ENCODE measurements at regions of chr10 and their contacts with region 1.

Region 1: DNA sequence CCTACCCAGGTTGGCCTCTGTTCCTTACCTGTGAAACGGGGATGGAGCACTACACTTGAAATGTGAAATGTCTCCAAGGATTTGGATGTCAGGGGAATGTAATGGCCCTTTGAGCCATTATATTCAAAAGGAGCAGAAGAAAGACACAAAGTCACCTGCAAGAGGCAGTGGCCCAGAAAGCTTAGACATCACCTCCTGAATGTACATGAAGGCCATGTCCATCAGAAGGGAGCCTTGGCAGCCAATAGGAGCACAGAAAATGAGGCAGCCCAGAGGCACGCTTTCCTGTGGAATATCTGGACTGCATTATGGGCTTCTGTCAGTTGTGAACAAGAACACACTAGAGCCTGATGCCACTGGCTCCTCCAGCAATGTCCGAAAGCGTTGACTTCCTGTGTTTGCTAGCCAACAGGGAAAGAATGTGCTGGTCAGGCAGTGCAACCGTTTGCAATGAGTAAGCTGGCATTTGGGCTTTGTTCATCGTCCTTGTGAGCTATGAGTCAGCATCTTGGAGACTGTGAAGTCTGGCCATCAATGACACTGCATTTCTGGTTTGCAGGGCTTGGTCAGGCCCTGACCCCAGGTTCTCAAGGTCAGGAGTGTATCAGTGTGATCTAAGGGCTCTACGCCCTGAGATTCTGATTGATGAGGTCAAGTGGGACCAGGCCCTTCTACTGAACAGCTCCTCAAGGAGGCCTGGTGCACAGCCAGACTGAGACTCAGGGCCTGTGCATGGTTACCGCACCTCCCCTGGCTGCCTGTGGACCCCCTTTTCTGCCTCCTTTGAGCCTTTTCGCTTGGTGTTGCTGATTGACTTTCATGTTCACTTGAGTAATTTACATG is 222.4 kb downstream of the RPS24 start:
- DNase-seq: peak; percentile 64 to 93
- H3K4me3 ChIP-seq: no peak overlapping the region
- H3K27ac ChIP-seq: peak overlapping the region; percentile 69 to 79
- H3K4me1 ChIP-seq: peaks cover 0 to 10% of the 10 kb centered on the region in 2 donors
- H3K27me3 ChIP-seq: no peaks in the 10 kb centered on the region
- CTCF ChIP-seq: no peak

Region 2: GRCh38 chr10:78211561-78212051 is 44.4 kb before region 1 on chr10:
- intact Hi-C with region 1: loop called (anchors 5 kb)
- DNase-seq: no peak
- H3K4me3 ChIP-seq: no peak overlapping the region
- H3K27ac ChIP-seq: no peak overlapping the region
- H3K4me1 ChIP-seq: peaks cover 4 to 13% of the 10 kb centered on the region in 2 donors
- H3K27me3 ChIP-seq: no peaks in the 10 kb centered on the region
- CTCF ChIP-seq: peak; percentile 42 to 72 (median 45)

Region 3: GRCh38 chr10:78310481-78311080 is 54.6 kb after region 1 on chr10:
- intact Hi-C with region 1: no loop called
- DNase-seq: peak in 1 of 2 donors; percentile 60
- H3K4me3 ChIP-seq: no peak overlapping the region
- H3K27ac ChIP-seq: no peak overlapping the region
- H3K4me1 ChIP-seq: no peaks in the 10 kb centered on the region
- H3K27me3 ChIP-seq: no peaks in the 10 kb centered on the region
- CTCF ChIP-seq: no peak

Region 4: GRCh38 chr10:78407009-78407711 is 151.1 kb after region 1 on chr10:
- intact Hi-C with region 1: loop called (anchors 2 kb)
- DNase-seq: peak; percentile 41 to 83
- H3K4me3 ChIP-seq: peak overlapping the region; percentile 41 to 49
- H3K27ac ChIP-seq: peak overlapping the region in 1 of 2 donors; percentile 0
- H3K4me1 ChIP-seq: peaks cover 4 to 26% of the 10 kb centered on the region in 2 donors
- H3K27me3 ChIP-seq: no peaks in the 10 kb centered on the region
- CTCF ChIP-seq: no peak

Measured in ascending aorta (tissue), 2 donors.